ENCODE measurements at regions of chr12 and their contacts with region 1.

Region 1: DNA sequence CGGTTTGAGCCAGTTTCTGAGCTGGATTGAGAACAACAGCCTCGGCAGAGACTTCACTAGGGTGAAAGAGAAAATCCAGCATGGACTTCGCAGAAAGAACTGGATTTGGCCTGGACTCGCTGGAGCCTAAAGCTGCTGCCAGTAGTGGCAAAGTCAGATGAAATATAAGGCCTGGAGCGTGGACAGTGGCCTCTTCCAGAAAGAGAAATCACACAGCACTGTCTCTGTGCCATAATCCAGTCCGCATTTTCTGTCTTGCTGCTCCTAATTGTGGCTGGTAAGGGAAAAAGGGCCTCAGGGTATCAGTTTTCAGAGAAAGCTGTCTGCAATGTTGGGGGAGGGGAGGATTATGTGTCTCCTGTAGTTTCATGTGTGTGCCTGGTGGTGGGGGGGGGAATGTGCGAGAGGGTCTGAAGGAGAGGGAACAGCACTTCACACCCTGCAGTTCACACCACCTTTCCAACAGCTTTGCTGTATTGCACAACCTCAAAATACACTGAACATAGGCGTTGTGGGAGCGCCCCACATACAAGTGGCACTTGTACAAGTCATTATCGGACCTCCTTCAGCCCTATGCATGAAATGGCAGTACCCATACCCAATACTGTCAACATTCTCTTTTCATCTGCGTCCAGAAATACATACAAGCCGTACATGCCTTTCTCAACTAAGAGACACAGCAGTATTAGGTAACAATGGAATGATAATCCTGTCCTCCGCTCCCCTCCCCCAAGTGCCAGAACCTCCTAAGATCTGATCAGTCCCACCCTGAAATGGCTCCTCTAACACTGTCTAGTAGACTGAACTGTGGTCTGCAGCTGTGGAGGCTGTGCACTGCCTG is 107.5 kb upstream of the ATF7IP start:
- DNase-seq: peak; percentile 81 to 95
- H3K4me3 ChIP-seq: peak overlapping the region; percentile 20 to 57
- H3K27ac ChIP-seq: peak overlapping the region; percentile 83 to 87
- H3K4me1 ChIP-seq: peaks cover 16 to 41% of the 10 kb centered on the region in 2 donors
- H3K27me3 ChIP-seq: no peaks in the 10 kb centered on the region
- CTCF ChIP-seq: peak in 1 of 3 experiments; percentile 13

Region 2: DNA sequence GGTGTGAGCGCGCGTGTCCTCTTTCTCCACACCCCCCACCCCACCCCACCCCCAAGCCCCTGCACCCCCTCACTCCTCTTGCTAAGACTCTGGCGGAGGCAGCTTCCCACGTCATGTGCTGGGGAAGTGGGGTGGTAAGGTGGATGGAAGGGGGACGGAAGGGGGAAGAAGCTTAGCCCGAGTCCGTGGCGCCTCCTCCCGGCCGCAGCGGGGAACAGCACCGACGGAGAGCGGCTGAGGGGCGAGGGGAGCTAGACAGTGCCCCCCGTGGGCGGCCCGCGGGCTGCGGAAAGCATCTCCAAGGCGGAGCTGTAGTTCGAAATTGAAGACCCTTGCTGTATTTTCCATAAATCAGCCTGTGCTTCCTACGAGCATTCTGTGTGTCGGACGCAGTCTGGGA is 276.0 kb before region 1 on chr12:
- intact Hi-C with region 1: no loop called
- DNase-seq: no peak
- H3K4me3 ChIP-seq: peak overlapping the region in 1 of 2 donors; percentile 42
- H3K27ac ChIP-seq: no peak overlapping the region
- H3K4me1 ChIP-seq: peaks cover 0 to 2% of the 10 kb centered on the region in 2 donors
- H3K27me3 ChIP-seq: no peaks in the 10 kb centered on the region
- CTCF ChIP-seq: peak in 1 of 3 experiments; percentile 11

Region 3: DNA sequence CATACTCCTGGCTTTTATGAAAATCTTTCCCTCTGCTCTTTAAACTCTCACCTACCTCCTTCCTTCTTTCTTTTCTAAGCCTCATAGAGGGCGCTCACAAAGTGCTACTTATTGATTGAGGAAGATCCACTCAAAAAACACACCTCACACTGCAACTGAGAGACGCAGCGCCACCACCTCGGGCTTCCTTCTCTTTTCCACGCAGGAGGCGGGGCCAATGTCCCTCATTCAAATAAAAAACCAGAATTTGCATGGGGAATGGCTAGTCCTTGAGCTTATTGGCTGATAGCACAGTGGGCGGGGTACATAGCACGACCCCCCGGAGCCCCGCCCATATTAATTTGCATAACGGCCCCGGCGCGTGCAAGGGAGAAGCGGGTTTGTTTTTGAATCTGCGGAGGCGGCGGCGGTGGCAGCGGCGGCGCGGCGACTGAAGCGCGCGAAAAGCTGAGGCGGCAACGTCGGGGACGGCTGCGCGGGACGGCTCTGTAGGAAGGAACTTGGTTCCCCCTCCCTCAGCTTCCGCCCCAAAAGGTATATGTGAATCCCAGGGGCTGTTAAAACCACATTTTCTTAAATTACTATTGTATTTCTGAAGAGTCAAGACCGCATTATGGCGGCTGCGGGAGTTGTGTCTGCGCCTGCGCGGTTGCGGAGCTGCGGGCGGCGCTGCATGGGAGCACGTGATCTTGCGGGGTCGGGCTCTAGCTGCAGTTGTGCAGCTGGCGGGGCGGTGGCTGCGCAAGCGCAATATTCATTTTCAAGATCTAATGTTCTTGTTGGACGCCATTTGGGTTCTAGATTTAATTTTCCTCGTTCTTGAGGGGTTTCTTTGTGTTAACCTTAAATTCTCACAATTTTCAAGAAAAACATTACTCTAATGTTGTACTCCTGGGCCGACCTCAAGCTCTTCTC is 107.6 kb after region 1 on chr12 and contains the start of gene ATF7IP:
- intact Hi-C with region 1: loop called (anchors 1 kb)
- DNase-seq: peak; percentile 93 to 98
- H3K4me3 ChIP-seq: peak within 1 kb of the TSS; percentile 73 to 84
- H3K27ac ChIP-seq: peak within 1 kb of the TSS; percentile 96 to 98
- H3K4me1 ChIP-seq: peaks cover 0 to 5% of the 10 kb centered on the region in 2 donors
- H3K27me3 ChIP-seq: no peaks in the 10 kb centered on the region
- CTCF ChIP-seq: peak in 1 of 3 experiments; percentile 18
- total RNA-seq, gene ATF7IP: 58.2 TPM

Region 4: GRCh38 chr12:14384783-14385638 is 127.1 kb after region 1 on chr12:
- intact Hi-C with region 1: loop called (anchors 5 kb)
- DNase-seq: peak in 1 of 2 donors; percentile 77
- H3K4me3 ChIP-seq: peak overlapping the region; percentile 39 to 47
- H3K27ac ChIP-seq: peak overlapping the region in 1 of 2 donors; percentile 57
- H3K4me1 ChIP-seq: peaks cover 0 to 5% of the 10 kb centered on the region in 2 donors
- H3K27me3 ChIP-seq: no peaks in the 10 kb centered on the region
- CTCF ChIP-seq: no peak

Region 5: GRCh38 chr12:14417715-14418114 is 159.8 kb after region 1 on chr12:
- intact Hi-C with region 1: loop called (anchors 5 kb)
- DNase-seq: peak; percentile 24 to 72
- H3K4me3 ChIP-seq: no peak overlapping the region
- H3K27ac ChIP-seq: no peak overlapping the region
- H3K4me1 ChIP-seq: peaks cover 0 to 7% of the 10 kb centered on the region in 2 donors
- H3K27me3 ChIP-seq: no peaks in the 10 kb centered on the region
- CTCF ChIP-seq: no peak

Region 6: DNA sequence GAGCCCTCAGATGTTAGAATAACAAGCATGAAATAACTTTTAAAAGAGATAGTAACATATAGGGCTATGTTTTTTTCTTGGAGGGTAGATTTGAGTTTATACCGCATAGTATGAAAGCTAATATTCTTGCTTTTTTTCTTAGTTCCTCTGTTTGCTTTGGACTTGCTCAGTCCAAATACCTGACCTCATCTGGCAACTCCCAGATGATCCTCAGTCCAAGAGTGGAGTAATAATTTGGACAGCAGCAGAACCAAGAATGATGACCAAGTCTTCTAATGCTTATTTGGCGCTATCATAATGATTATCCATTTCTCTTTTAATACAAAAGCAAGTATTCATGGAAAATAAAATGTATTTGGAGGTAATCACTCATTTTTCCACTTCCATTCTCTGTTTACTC is 392.8 kb after region 1 on chr12:
- intact Hi-C with region 1: loop called (anchors 5 kb)
- DNase-seq: no peak
- H3K4me3 ChIP-seq: no peak overlapping the region
- H3K27ac ChIP-seq: peak overlapping the region; percentile 37 to 48
- H3K4me1 ChIP-seq: peaks cover 2 to 6% of the 10 kb centered on the region in 2 donors
- H3K27me3 ChIP-seq: no peaks in the 10 kb centered on the region
- CTCF ChIP-seq: no peak